CD8-positive, alpha-beta T cell (primary cell): ENCODE measurements at regions of chr9 and their contacts with region 1.

Region 1: DNA sequence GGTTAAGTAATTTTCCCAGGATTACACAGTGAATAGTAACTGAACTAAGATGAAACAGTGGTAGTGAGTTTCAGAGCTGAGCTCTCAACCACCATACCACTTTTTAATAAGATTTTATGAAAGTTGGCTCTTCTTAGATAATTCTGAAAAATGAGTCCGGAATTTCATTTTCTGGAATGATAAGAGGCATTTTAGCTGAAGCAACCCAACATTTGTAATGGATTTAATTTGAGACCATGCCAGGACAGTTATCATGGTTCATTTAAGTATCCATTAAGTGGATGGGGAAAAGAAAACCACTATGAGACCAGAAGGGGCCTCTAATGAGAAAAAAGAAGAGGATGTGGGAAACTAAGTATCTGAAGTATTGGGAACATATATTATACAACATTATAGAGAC is 464.7 kb upstream of the C9orf72 start:
- DNase-seq: no peak
- ATAC-seq: no peak
- H3K4me3 ChIP-seq: no peak overlapping the region
- H3K4me3 Mint-ChIP-seq: no peak overlapping the region
- H3K27ac ChIP-seq: no peak overlapping the region
- H3K27ac Mint-ChIP-seq: no peak overlapping the region
- H3K4me1 ChIP-seq: no peaks in the 10 kb centered on the region
- H3K4me1 Mint-ChIP-seq: no peaks in the 10 kb centered on the region
- H3K27me3 ChIP-seq: no peaks in the 10 kb centered on the region
- H3K27me3 Mint-ChIP-seq: no peaks in the 10 kb centered on the region
- CTCF ChIP-seq: no peak

Region 2: DNA sequence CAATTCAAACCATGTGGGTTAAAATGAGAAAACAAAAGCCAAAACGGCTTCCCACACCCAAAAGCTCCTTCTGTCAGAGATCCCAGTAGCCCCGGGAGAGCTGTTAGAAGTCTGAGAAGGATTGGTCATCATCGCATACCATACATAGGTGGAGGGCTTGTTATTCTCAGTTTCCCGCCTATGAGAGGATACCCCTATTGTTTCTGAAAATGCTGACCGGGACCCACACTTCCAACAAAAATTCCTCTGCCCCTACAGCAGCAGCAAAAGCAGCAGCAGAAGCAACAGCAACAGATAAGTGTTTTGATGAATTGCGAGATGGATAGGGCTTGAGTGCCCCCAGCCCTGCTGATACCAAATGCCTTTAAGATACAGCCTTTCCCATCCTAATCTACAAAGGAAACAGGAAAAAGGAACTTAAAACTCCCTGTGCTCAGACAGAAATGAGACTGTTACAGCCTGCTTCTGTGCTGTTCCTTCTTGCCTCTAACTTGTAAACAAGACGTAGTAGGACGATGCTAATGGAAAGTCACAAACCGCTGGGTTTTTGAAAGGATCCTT is 928.9 kb before region 1 on chr9 and contains the start of gene TEK:
- CTCF ChIA-PET with region 1: no interaction called
- POLR2A ChIA-PET with region 1: no interaction called
- intact Hi-C with region 1: loop called in 1 of 2 experiments (anchors 5 kb)
- DNase-seq: no peak
- ATAC-seq: no peak
- H3K4me3 ChIP-seq: no peak within 1 kb of the TSS
- H3K4me3 Mint-ChIP-seq: no peak within 1 kb of the TSS
- H3K27ac ChIP-seq: no peak within 1 kb of the TSS
- H3K27ac Mint-ChIP-seq: no peak within 1 kb of the TSS
- H3K4me1 ChIP-seq: no peaks in the 10 kb centered on the region
- H3K4me1 Mint-ChIP-seq: no peaks in the 10 kb centered on the region
- H3K27me3 ChIP-seq: peaks cover 0 to 3% of the 10 kb centered on the region in 2 experiments
- H3K27me3 Mint-ChIP-seq: no peaks in the 10 kb centered on the region
- CTCF ChIP-seq: no peak
- total RNA-seq, gene TEK: not detected

Region 3: DNA sequence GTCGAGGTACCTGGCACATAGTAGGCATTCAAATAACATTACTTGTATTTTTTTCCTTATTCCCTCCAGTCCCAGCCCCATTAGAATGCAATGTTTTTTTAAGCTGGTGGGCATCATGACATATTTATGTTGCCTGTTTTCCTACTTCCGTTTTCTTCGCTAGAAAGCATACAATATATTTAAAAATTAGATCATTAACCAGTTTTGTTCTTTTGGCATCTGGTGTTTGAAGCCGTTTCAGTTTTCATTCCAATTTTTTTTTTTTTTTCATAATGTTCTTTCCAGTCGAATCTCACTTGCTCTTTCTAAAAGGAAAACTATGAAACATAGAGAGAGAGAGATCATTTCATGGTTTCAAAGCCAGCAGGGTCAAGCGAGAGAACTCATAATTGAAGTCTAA is 236.4 kb before region 1 on chr9:
- CTCF ChIA-PET with region 1: no interaction called
- POLR2A ChIA-PET with region 1: no interaction called
- intact Hi-C with region 1: no loop called
- DNase-seq: no peak
- ATAC-seq: no peak
- H3K4me3 ChIP-seq: no peak overlapping the region
- H3K4me3 Mint-ChIP-seq: no peak overlapping the region
- H3K27ac ChIP-seq: no peak overlapping the region
- H3K27ac Mint-ChIP-seq: no peak overlapping the region
- H3K4me1 ChIP-seq: no peaks in the 10 kb centered on the region
- H3K4me1 Mint-ChIP-seq: no peaks in the 10 kb centered on the region
- H3K27me3 ChIP-seq: no peaks in the 10 kb centered on the region
- H3K27me3 Mint-ChIP-seq: peaks cover 4% of the 10 kb centered on the region
- CTCF ChIP-seq: no peak

Region 4: GRCh38 chr9:28518439-28518838 is 480.5 kb after region 1 on chr9:
- CTCF ChIA-PET with region 1: no interaction called
- POLR2A ChIA-PET with region 1: no interaction called
- intact Hi-C with region 1: no loop called
- DNase-seq: no peak
- ATAC-seq: no peak
- H3K4me3 ChIP-seq: no peak overlapping the region
- H3K4me3 Mint-ChIP-seq: no peak overlapping the region
- H3K27ac ChIP-seq: no peak overlapping the region
- H3K27ac Mint-ChIP-seq: no peak overlapping the region
- H3K4me1 ChIP-seq: no peaks in the 10 kb centered on the region
- H3K4me1 Mint-ChIP-seq: no peaks in the 10 kb centered on the region
- H3K27me3 ChIP-seq: no peaks in the 10 kb centered on the region
- H3K27me3 Mint-ChIP-seq: no peaks in the 10 kb centered on the region
- CTCF ChIP-seq: no peak